Activated CD8-positive, alpha-beta T cell treated with anti-CD3 and anti-CD28 coated beads, Interleukin-2, amount 10 ng/mL, durations not matched to agents 7 days and 5 days (primary cell): ENCODE measurements at regions of chr14 and their contacts with region 1.

Region 1: GRCh38 chr14:100078991-100079725 is 13.9 kb downstream of the EVL start:
- DNase-seq: peak; percentile 94
- ATAC-seq: peak; percentile 83
- H3K4me3 Mint-ChIP-seq: peak overlapping the region; percentile 91
- H3K27ac Mint-ChIP-seq: peak overlapping the region; percentile 93
- H3K4me1 Mint-ChIP-seq: peaks cover 97% of the 10 kb centered on the region
- H3K27me3 Mint-ChIP-seq: no peaks in the 10 kb centered on the region

Region 2: GRCh38 chr14:100012402-100013327 is 66.5 kb before region 1 on chr14:
- CTCF ChIA-PET with region 1: no interaction called
- POLR2A ChIA-PET with region 1: no interaction called
- DNase-seq: no peak
- ATAC-seq: peak; percentile 36
- H3K4me3 Mint-ChIP-seq: no peak overlapping the region
- H3K27ac Mint-ChIP-seq: no peak overlapping the region
- H3K4me1 Mint-ChIP-seq: peaks cover 21% of the 10 kb centered on the region
- H3K27me3 Mint-ChIP-seq: peaks cover 9% of the 10 kb centered on the region

Region 3: GRCh38 chr14:100025111-100025510 is 54.0 kb before region 1 on chr14:
- CTCF ChIA-PET with region 1: no interaction called
- POLR2A ChIA-PET with region 1: no interaction called
- DNase-seq: peak; percentile 59
- ATAC-seq: peak; percentile 89
- H3K4me3 Mint-ChIP-seq: no peak overlapping the region
- H3K27ac Mint-ChIP-seq: no peak overlapping the region
- H3K4me1 Mint-ChIP-seq: peaks cover 10% of the 10 kb centered on the region
- H3K27me3 Mint-ChIP-seq: peaks cover 2% of the 10 kb centered on the region

Region 4: GRCh38 chr14:100056964-100057795 is 22.0 kb before region 1 on chr14:
- CTCF ChIA-PET with region 1: interaction called, 160 read pairs
- POLR2A ChIA-PET with region 1: interaction called, 15 read pairs
- DNase-seq: peak; percentile 40
- ATAC-seq: peak; percentile 55
- H3K4me3 Mint-ChIP-seq: no peak overlapping the region
- H3K27ac Mint-ChIP-seq: peak overlapping the region; percentile 74
- H3K4me1 Mint-ChIP-seq: peaks cover 70% of the 10 kb centered on the region
- H3K27me3 Mint-ChIP-seq: no peaks in the 10 kb centered on the region

Region 5: GRCh38 chr14:100062590-100062989 is 16.6 kb before region 1 on chr14:
- CTCF ChIA-PET with region 1: interaction called, 237 read pairs
- POLR2A ChIA-PET with region 1: interaction called, 170 read pairs
- DNase-seq: peak; percentile 51
- ATAC-seq: peak; percentile 21
- H3K4me3 Mint-ChIP-seq: peak overlapping the region; percentile 76
- H3K27ac Mint-ChIP-seq: peak overlapping the region; percentile 95
- H3K4me1 Mint-ChIP-seq: peaks cover 68% of the 10 kb centered on the region
- H3K27me3 Mint-ChIP-seq: no peaks in the 10 kb centered on the region

Region 6: DNA sequence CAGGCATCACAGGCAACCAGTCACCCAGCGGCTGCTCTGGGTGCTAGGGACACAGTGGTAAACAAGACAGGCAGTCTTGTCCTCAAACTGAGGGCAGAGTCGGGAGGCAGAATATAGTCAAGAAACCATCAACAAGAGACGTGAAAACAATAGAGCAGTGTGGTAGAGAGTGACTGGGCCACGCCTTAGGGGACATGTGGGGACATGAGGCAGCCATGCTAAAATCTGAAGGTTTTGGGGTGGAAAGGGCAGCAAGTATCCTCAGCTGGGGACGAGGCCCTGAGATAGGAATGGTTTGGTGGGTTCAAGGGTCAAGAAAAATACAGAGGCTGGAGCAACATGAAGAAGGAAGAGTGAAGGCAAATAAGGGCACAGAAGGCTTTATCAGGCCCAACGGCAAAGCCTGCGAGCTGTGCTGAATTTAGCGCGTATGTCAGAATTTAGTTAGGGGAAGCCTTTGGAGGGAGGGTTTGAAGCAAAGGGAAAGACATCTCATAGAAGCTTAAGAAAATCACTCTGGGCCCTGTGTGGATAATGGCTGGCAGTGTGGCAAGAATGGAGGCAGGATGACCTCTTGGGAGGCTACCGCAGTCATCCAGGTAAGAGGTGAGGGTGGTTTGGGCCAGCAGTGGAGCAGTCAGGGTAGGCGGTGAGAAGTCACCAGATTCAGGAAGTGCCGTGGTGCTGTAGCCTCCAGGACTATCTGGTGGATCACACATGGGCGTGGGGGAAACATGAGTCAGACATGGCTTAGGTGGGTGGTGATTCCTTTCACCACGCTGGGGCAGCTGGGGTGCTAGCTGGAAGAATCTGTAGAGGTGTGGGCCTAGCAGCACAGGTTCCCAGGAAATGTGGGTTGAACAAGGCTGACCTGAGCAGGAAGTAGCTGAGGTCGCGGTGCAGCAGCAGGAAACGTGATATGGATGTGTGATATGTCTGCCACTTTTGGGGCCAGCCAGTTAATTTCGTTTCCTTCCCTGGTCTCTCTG is 10.9 kb before region 1 on chr14:
- CTCF ChIA-PET with region 1: interaction called, 237 read pairs
- POLR2A ChIA-PET with region 1: interaction called, 170 read pairs
- DNase-seq: peak; percentile 95
- ATAC-seq: peak; percentile 67
- H3K4me3 Mint-ChIP-seq: peak overlapping the region; percentile 91
- H3K27ac Mint-ChIP-seq: peak overlapping the region; percentile 97
- H3K4me1 Mint-ChIP-seq: peaks cover 36% of the 10 kb centered on the region
- H3K27me3 Mint-ChIP-seq: no peaks in the 10 kb centered on the region

Region 7: GRCh38 chr14:100091386-100091785 is 12.2 kb after region 1 on chr14:
- CTCF ChIA-PET with region 1: interaction called, 237 read pairs
- POLR2A ChIA-PET with region 1: interaction called, 33 read pairs
- DNase-seq: no peak
- ATAC-seq: no peak
- H3K4me3 Mint-ChIP-seq: no peak overlapping the region
- H3K27ac Mint-ChIP-seq: peak overlapping the region; percentile 13
- H3K4me1 Mint-ChIP-seq: peaks cover 90% of the 10 kb centered on the region
- H3K27me3 Mint-ChIP-seq: no peaks in the 10 kb centered on the region

Region 8: DNA sequence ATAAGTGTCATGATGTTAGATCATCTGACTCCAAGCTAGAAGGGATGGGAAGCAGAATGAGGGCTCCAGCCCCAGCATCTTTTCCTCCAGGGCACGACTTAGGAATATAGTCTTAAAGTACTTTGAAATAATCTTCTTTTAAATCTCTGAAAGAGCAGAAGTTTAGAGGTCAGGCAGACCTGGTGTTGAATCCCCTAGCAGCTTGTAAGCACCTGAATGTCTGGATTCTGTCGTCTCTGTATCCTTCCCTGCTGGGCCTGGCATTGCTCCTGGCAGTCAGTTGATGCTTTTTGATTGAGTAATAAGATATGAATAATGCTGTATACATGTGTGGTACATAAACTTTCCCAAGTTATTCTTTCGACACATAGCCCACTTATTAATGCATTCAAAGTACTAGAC is 17.4 kb after region 1 on chr14:
- CTCF ChIA-PET with region 1: interaction called, 321 read pairs
- POLR2A ChIA-PET with region 1: interaction called, 33 read pairs
- DNase-seq: no peak
- ATAC-seq: no peak
- H3K4me3 Mint-ChIP-seq: no peak overlapping the region
- H3K27ac Mint-ChIP-seq: peak overlapping the region; percentile 51
- H3K4me1 Mint-ChIP-seq: peaks cover 91% of the 10 kb centered on the region
- H3K27me3 Mint-ChIP-seq: no peaks in the 10 kb centered on the region